HCT116 (cell line): ENCODE measurements at regions of chr17 and their contacts with region 1.

Region 1: DNA sequence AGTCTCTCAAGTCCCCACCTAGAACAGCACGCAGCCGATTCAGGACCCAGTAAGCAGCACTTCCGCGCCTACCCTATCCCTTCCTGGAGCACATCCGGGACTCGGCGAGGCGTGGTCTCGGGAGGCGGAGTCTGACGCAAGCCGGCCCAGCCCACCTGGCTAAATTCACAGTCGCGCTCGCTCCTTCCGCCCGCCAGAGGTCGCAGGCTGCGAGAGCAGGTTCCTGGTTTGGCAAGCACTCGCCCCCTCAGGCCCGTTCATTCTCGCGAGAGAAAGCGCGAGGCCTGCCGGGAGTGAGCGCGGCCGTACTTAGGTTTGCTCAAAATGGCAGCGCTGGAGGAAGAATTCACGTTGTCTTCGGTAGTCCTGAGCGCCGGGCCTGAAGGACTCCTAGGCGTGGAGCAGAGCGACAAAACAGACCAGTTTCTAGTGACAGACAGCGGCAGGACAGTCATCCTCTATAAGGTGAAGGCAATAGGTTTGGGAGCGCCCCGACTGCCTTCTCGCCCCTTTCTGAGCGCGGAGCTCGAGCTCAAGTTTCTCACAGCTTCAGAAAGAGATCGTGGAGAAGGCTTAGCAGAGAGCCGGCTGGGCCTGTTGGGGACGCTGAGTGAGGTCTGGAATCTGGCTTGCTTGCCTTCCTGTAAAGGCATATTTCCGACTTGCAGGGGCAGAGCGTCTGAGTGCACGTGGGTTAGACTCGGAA is at the start of gene NOL11:
- DNase-seq: peak; percentile 99
- ATAC-seq: peak; percentile 98
- H3K4me3 ChIP-seq: peak within 1 kb of the TSS; percentile 83 to 94
- H3K27ac ChIP-seq: peak within 1 kb of the TSS; percentile 77
- H3K4me1 ChIP-seq: peaks cover 7 to 16% of the 10 kb centered on the region in 2 experiments; a peak in 3 of 4 replicates
- H3K27me3 ChIP-seq: no peaks in the 10 kb centered on the region
- CTCF ChIP-seq: peak; percentile 92 to 99 (median 96)
- POLR2A ChIP-seq: peak; percentile 95
- RAD21 ChIP-seq: peak; percentile 83
- total RNA-seq, gene NOL11: 118 TPM

Region 2: DNA sequence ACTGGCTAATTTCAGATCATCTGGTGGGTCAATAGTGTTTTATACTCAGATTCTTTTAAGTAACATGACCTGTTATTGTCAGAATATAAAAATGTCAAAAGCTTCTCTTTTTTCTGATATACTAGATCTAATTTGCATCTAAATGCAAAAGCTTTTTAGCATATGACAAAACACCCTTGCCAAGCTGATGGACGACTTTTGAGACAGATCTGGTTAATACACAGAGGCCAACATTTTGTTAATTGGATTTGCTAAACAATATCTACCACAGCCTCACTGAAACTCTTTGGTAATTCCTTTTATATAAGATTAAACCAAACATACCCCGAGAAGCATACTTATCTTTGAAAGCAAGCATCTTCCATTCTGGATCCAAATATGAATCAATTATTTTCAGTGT is 10.3 kb before region 1 on chr17:
- CTCF ChIA-PET with region 1: no interaction called
- POLR2A ChIA-PET with region 1: no interaction called
- RAD21 ChIA-PET with region 1: no interaction called
- intact Hi-C with region 1: no loop called
- DNase-seq: no peak
- ATAC-seq: no peak
- H3K4me3 ChIP-seq: no peak overlapping the region
- H3K27ac ChIP-seq: no peak overlapping the region
- H3K4me1 ChIP-seq: peaks cover 0 to 4% of the 10 kb centered on the region in 2 experiments; a peak in 2 of 4 replicates
- H3K27me3 ChIP-seq: no peaks in the 10 kb centered on the region
- CTCF ChIP-seq: no peak
- POLR2A ChIP-seq: no peak
- RAD21 ChIP-seq: no peak

Region 3: DNA sequence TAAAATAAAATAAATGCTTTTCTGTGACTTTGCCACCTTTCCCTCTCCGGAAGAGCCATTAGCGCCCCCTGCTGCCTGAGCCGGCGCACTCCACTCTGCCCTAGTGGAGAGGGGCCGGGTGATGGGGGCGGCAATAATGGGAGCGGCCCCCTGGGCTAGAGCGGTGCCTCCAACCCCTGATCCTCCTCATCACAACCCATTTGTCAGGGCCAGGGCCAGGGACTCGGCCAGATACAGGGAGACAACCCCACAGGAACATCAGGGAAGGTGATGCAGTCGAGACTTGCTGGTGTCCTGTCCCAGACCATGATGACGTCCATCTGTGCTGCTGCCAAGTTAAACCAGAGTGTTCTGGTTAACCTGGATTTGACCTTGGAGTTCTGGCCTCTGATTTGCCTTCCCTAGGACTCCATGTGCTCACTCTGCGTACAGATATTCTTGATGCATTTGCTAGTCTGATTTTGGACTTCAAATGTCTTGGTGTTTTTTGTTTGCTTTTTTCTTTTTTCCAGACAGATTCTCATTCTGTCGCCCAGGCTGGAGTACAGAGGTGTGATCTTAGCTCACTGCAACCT is 61.4 kb after region 1 on chr17:
- CTCF ChIA-PET with region 1: no interaction called
- POLR2A ChIA-PET with region 1: interaction called, 5 read pairs
- RAD21 ChIA-PET with region 1: no interaction called
- intact Hi-C with region 1: loop called (anchors 1 kb)
- DNase-seq: peak; percentile 48
- ATAC-seq: peak; percentile 99
- H3K4me3 ChIP-seq: peak overlapping the region in 1 of 2 experiments; percentile 23; a peak in 2 of 4 replicates
- H3K27ac ChIP-seq: no peak overlapping the region
- H3K4me1 ChIP-seq: peaks cover 8 to 12% of the 10 kb centered on the region in 2 experiments; a peak in 3 of 4 replicates
- H3K27me3 ChIP-seq: no peaks in the 10 kb centered on the region
- CTCF ChIP-seq: peak; percentile 87 to 94 (median 90)
- POLR2A ChIP-seq: no peak
- RAD21 ChIP-seq: peak; percentile 80